B cell (primary cell): ENCODE measurements at regions of chr16 and their contacts with region 1.

Region 1: GRCh38 chr16:77211880-77212740 is 12.9 kb downstream of the SYCE1L start:
- DNase-seq: peak; percentile 81
- ATAC-seq: peak; percentile 78
- H3K4me3 ChIP-seq: peak overlapping the region; percentile 30 to 91 (median 81)
- H3K4me3 Mint-ChIP-seq: peak overlapping the region; percentile 87
- H3K27ac ChIP-seq: peak overlapping the region; percentile 48 to 65
- H3K27ac Mint-ChIP-seq: peak overlapping the region; percentile 82
- H3K4me1 ChIP-seq: peaks cover 4 to 14% of the 10 kb centered on the region in 2 donors
- H3K4me1 Mint-ChIP-seq: peaks cover 12% of the 10 kb centered on the region
- H3K27me3 ChIP-seq: no peaks in the 10 kb centered on the region
- H3K27me3 Mint-ChIP-seq: no peaks in the 10 kb centered on the region
- CTCF ChIP-seq: no peak

Region 2: DNA sequence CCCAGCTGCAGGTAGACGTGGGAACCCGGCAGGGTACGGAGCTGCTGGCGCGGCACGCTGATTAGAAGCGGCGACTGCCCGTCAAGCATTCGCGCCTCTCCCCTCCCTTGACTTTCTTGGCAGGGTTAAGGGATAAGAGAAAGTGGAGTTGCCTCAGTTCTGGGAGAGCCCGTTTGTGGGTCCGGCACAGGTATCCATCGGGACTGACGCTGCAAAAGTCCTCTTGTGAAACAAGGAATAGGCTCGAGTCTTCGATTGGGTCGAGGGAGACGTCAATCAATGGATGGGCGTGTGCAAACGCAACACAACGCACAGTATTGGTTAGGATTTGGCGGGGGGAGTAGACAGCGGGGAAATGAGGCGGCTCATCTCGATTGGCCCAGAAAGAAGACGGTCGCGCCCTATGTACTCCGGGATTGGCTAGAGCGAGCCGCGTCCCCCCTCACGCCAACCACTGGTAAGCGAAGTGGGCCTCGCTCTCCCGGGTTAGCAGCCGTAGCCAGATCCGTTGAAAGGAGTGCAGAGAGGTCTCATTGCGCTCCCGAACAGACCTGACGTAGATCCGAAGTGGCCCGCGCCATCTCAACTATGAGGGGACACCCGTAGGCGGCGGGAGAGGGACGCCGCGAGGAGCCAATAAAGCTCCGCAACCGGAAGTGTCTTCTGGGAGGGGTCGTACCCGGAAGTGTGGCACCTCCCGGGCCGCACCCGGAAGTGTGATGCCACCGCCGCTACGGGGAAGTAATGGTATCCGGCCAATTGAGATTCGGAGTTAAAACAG is 21.4 kb before region 1 on chr16 and contains the start of gene MON1B:
- CTCF ChIA-PET with region 1: no interaction called
- POLR2A ChIA-PET with region 1: interaction called, 3 read pairs
- intact Hi-C with region 1: loop called (anchors 1 kb)
- DNase-seq: peak; percentile 98
- ATAC-seq: peak; percentile 97
- H3K4me3 ChIP-seq: peak within 1 kb of the TSS; percentile 74 to 98 (median 91)
- H3K4me3 Mint-ChIP-seq: peak within 1 kb of the TSS; percentile 92
- H3K27ac ChIP-seq: peak within 1 kb of the TSS; percentile 94 to 98
- H3K27ac Mint-ChIP-seq: peak within 1 kb of the TSS; percentile 99
- H3K4me1 ChIP-seq: peaks cover 17 to 23% of the 10 kb centered on the region in 2 donors
- H3K4me1 Mint-ChIP-seq: peaks cover 40% of the 10 kb centered on the region
- H3K27me3 ChIP-seq: no peaks in the 10 kb centered on the region
- H3K27me3 Mint-ChIP-seq: peaks cover 4% of the 10 kb centered on the region
- CTCF ChIP-seq: no peak
- total RNA-seq, gene MON1B: 79.1 and 81.0 TPM in 2 replicates